ENCODE measurements at regions of chr1 and their contacts with region 1.

Region 1: GRCh38 chr1:171300401-171300800 is 13.6 kb upstream of the FMO4 start:
- DNase-seq: no peak
- ATAC-seq: no peak
- H3K4me3 ChIP-seq: no peak overlapping the region
- H3K27ac ChIP-seq: no peak overlapping the region
- H3K4me1 ChIP-seq: no peaks in the 10 kb centered on the region
- H3K27me3 ChIP-seq: no peaks in the 10 kb centered on the region
- CTCF ChIP-seq: no peak
- POLR2A ChIP-seq: no peak

Region 2: DNA sequence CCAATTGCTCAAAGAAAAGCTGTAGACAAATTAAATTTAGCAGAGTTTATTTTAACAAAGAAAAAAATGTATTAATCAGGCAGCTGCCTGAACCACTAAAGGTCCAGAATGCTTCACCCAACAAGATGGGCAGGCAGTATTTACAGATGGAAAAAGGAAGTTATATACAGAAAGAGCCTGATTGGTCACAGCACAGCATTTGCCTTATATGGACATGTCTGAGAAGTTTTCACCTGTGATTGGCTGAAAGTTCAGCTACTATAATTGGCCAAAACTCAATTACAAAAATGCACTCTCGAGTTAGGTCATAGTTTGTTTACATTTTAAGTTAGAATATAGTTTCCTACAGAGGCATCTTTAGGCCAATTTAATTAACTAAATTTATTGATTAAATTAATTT is 67.2 kb before region 1 on chr1:
- intact Hi-C with region 1: no loop called
- DNase-seq: no peak
- ATAC-seq: no peak
- H3K4me3 ChIP-seq: no peak overlapping the region
- H3K27ac ChIP-seq: no peak overlapping the region
- H3K4me1 ChIP-seq: no peaks in the 10 kb centered on the region
- H3K27me3 ChIP-seq: no peaks in the 10 kb centered on the region
- CTCF ChIP-seq: no peak
- POLR2A ChIP-seq: no peak

Region 3: DNA sequence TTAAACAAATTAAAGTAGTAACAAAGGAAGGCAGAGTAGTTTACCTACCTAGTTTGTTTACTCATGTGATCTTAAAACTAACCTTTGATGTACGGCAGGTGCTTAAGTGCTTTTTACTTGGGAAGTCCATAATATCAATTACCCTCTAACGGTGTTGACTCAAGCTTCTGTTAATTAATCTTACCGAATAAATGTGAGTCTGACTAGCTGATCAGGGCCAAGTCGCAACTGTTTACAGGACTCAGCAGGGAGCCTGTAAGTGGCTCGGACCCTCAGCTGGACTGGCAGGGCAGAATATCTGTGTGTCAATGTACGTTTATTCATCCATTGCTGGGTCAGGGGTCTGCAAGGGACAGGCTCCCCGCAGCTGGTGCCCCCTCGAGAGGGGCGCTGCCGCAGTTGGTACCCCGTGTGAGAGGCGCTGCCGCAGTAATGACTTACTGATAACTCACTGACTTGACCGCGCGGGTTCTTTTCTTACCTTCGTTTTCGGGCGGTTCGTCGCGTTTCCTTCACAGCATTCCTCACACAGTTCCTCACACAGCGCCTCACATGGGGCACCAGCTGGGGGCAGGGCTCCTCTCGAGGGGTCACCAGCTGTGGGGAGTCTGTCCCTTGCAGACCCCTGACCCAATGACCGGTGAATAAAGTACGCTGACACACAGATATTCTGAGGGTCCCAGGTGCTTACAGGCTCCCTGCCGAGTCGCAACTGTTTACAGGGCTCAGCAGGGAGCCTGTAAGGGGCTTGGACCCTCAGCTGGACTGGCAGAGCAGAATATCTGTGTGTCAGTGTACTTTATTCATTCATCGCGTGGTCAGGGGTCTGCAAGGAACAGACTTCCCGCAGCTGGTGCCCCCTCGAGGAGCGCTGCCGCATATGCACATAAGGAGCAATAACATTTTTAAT is 49.1 kb before region 1 on chr1:
- intact Hi-C with region 1: loop called (anchors 10 kb)
- DNase-seq: peak; percentile 22 to 62 (median 32)
- ATAC-seq: peak; percentile 61
- H3K4me3 ChIP-seq: peak overlapping the region in 1 of 2 donors; percentile 20
- H3K27ac ChIP-seq: peak overlapping the region in 1 of 4 donors; percentile 59
- H3K4me1 ChIP-seq: peaks cover 5% of the 10 kb centered on the region
- H3K27me3 ChIP-seq: no peaks in the 10 kb centered on the region
- CTCF ChIP-seq: peak in 6 of 7 experiments; percentile 28 to 53 (median 40)
- POLR2A ChIP-seq: no peak

Region 4: GRCh38 chr1:171754353-171754705 is 453.9 kb after region 1 on chr1:
- intact Hi-C with region 1: no loop called
- DNase-seq: no peak
- ATAC-seq: no peak
- H3K4me3 ChIP-seq: no peak overlapping the region
- H3K27ac ChIP-seq: no peak overlapping the region
- H3K4me1 ChIP-seq: no peaks in the 10 kb centered on the region
- H3K27me3 ChIP-seq: no peaks in the 10 kb centered on the region
- CTCF ChIP-seq: no peak
- POLR2A ChIP-seq: no peak

Measured in body of pancreas (tissue), 4 donors.